Cardiac septum (tissue), 1 donor: ENCODE measurements at regions of chr1 and their contacts with region 1.

Region 1: GRCh38 chr1:21200767-21201166 is 24.1 kb upstream of the EIF4G3 start:
- DNase-seq: no peak

Region 2: DNA sequence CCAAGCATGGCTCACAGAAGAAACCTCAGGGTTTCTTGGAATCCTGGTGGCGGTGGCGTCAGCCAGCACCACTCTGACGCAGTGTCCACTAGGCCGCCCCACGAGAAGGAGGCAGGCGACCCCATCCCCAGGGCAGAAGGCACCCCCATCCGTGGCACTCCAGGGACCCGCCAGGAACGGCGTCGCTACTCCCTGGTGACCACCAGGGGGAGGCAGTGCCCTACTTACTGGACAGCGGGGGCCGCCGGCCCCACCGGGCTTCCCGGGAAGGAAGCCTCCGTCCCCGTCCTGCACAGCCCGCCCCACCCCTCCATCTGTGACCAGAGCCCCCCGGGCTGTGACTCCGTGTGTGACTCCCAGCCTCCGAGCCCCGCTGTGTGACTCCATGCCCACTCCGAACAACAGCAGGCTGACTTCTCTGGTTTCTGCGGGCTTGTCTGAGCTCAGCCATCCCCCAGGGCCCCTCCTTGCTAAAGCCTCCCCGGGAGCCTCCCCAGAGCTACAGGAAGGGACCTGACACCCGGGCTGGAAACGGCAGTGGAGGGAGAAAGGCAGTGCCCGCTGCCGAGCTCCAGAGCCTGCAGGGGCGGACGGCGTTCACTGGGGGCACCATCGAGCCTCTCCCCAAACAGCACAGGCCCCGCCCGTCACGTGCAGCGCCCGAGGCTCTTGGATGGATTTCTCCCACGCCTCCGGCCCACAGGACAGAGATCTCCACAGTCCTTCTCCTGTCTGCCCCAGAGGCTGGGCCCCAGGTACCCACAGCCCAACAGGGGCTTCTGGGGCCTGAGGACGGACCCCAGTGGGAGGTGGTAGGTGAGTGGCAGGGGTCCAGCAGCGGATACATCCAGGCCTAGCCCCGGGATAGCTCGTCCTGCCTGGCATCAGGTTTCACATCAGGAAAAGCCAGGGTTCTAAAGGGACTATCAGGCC is 504.1 kb before region 1 on chr1:
- intact Hi-C with region 1: loop called (anchors 1 kb)
- DNase-seq: peak; percentile 90

Region 3: DNA sequence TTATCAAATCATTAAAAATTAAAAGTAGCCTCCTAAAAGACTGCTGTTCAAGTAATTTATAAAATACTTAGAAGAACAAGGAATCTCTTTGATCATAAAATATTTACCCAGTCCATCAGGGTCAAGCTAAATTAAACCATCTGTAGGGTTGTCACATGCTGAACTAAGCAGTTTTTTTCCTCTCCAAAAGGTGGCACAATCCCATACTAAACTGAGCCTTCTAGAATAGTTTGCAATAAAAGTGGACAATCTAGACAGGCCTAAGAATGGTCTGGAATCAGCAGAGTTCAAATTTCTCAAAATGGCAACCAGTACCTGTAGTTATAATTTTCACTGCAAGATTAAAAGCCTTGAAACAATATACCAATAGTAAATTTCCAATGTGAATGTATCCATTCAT is 218.9 kb before region 1 on chr1:
- intact Hi-C with region 1: loop called (anchors 2 kb)
- DNase-seq: no peak